ENCODE measurements at regions of chr15 and their contacts with region 1.

Region 1: GRCh38 chr15:40660686-40661085 is 34.3 kb upstream of the RAD51 start:
- DNase-seq: no peak
- ATAC-seq: no peak; the same call in 1 of the 2 replicates
- H3K4me3 ChIP-seq: no peak overlapping the region
- H3K27ac ChIP-seq: no peak overlapping the region
- H3K4me1 ChIP-seq: no peaks in the 10 kb centered on the region
- H3K27me3 ChIP-seq: no peaks in the 10 kb centered on the region
- CTCF ChIP-seq: no peak

Region 2: DNA sequence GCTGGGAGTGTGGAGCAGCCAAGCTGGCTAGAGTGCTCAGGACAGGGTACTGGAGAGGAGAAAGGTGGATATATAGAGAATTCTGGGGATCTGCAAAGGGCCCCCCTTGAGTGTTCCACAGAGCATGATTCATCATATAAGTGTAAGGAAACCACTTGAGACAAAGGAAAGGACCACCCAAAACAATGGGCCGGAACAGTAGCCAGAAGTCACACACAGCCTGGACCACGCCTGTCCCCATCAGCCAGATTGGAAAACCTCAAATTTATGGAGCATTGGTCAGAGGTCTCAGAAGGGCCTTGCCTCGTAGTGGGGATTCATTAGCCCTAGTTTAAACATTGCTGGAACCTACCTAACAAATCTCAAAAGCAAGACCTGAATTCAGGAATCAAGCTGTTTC is 283.1 kb before region 1 on chr15:
- CTCF ChIA-PET with region 1: no interaction called
- POLR2A ChIA-PET with region 1: interaction called, 20 read pairs
- in situ Hi-C with region 1: no loop called
- intact Hi-C with region 1: no loop called
- DNase-seq: no peak
- ATAC-seq: no peak
- H3K4me3 ChIP-seq: no peak overlapping the region
- H3K27ac ChIP-seq: no peak overlapping the region
- H3K4me1 ChIP-seq: peaks cover 8% of the 10 kb centered on the region; the same call in 1 of the 2 replicates
- H3K27me3 ChIP-seq: no peaks in the 10 kb centered on the region
- CTCF ChIP-seq: no peak

Region 3: GRCh38 chr15:40702077-40702476 is 41.4 kb after region 1 on chr15:
- CTCF ChIA-PET with region 1: no interaction called
- POLR2A ChIA-PET with region 1: no interaction called
- in situ Hi-C with region 1: no loop called
- intact Hi-C with region 1: no loop called
- DNase-seq: no peak
- ATAC-seq: no peak
- H3K4me3 ChIP-seq: no peak overlapping the region
- H3K27ac ChIP-seq: no peak overlapping the region
- H3K4me1 ChIP-seq: no peaks in the 10 kb centered on the region
- H3K27me3 ChIP-seq: no peaks in the 10 kb centered on the region
- CTCF ChIP-seq: no peak